AG04450 (cell line): ENCODE measurements at regions of chr3 and their contacts with region 1.

Region 1: GRCh38 chr3:354432-354831 is 157.9 kb downstream of the CHL1 start:
- DNase-seq: peak; percentile 29
- H3K4me3 ChIP-seq: no peak overlapping the region
- H3K27ac ChIP-seq: no peak overlapping the region
- H3K27me3 ChIP-seq: no peaks in the 10 kb centered on the region
- CTCF ChIP-seq: peak; percentile 88

Region 2: DNA sequence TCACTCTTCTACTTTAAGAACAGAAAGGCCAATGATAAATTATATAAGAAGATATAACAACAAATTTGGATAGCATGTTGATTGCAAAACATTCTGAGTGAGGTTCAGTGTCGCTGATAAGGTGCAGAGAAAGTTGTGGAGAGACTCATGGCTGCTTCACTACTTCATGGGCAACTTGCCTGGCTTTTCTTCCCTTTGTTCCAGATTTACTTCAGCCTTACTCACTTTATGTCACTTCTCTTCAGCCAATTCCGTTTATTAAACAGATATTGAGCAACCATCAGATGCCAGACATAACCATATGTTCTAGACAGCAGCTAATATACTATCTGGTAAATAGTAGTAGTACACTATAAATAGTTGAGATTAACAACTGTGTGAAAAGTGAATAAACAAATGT is 307.9 kb before region 1 on chr3:
- CTCF ChIA-PET with region 1: interaction called, 114 read pairs
- POLR2A ChIA-PET with region 1: no interaction called
- DNase-seq: no peak
- H3K4me3 ChIP-seq: no peak overlapping the region
- H3K27ac ChIP-seq: no peak overlapping the region
- H3K27me3 ChIP-seq: no peaks in the 10 kb centered on the region
- CTCF ChIP-seq: no peak

Region 3: DNA sequence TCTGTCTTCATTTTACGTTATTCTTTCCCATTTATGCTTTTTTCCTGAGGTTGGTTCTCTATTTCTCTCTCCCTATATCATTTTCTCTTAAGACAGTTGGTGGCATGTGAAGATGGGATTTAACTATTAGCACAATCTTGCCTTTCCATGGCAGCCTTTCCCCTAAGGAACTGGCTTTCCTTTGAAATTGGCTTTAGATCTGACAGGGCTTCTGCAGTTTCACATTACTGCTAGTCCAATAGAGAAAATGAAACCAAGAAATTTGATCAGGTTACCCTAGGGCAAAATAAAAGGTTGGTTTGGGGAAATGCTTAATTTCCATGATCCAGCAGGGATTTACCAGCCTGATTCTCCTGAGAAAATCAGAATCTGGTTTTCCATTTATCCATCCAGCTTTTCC is 180.5 kb before region 1 on chr3:
- CTCF ChIA-PET with region 1: interaction called, 14 read pairs
- POLR2A ChIA-PET with region 1: no interaction called
- DNase-seq: no peak
- H3K4me3 ChIP-seq: no peak overlapping the region
- H3K27ac ChIP-seq: no peak overlapping the region
- H3K27me3 ChIP-seq: no peaks in the 10 kb centered on the region
- CTCF ChIP-seq: no peak

Region 4: DNA sequence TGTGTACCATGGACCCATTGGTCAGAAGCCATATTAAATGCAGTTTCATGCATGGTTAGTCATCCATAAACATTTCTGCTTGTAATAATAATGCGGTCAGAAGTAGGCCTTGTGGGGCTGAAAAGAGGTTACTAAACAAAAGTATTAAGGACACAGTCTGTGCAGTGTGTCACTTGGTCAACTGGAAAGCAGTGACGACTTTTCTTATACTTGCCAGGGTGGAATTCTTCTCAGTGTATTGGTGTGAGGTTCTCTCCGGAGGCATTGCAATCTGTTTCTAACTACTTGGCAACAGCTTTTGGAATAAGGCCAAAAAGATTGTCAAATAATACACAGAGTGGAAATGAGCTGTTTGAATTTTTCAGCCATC is 111.1 kb before region 1 on chr3:
- CTCF ChIA-PET with region 1: interaction called, 16 read pairs
- POLR2A ChIA-PET with region 1: interaction called, 6 read pairs
- DNase-seq: peak; percentile 70
- H3K4me3 ChIP-seq: no peak overlapping the region
- H3K27ac ChIP-seq: peak overlapping the region; percentile 71
- H3K27me3 ChIP-seq: no peaks in the 10 kb centered on the region
- CTCF ChIP-seq: no peak

Region 5: DNA sequence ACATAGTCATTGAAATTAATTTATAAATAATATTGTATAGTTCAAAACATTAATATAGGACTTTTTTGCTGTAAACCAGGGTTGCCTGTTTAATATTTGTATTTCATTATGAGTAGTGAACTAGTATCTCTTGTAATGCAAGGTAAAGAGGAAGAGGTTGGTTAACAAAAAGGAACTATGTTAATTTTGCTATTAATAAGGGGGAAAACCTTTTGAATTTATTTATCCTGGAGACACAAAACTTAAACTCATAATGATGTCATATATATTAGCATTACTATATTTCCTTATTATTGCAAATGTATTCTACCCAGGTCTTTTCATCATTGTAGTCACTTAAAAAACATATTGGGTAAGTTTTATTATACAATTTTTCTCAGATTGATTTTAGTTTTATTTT is 63.4 kb before region 1 on chr3:
- CTCF ChIA-PET with region 1: interaction called, 16 read pairs
- POLR2A ChIA-PET with region 1: no interaction called
- DNase-seq: no peak
- H3K4me3 ChIP-seq: no peak overlapping the region
- H3K27ac ChIP-seq: no peak overlapping the region
- H3K27me3 ChIP-seq: no peaks in the 10 kb centered on the region
- CTCF ChIP-seq: no peak

Region 6: DNA sequence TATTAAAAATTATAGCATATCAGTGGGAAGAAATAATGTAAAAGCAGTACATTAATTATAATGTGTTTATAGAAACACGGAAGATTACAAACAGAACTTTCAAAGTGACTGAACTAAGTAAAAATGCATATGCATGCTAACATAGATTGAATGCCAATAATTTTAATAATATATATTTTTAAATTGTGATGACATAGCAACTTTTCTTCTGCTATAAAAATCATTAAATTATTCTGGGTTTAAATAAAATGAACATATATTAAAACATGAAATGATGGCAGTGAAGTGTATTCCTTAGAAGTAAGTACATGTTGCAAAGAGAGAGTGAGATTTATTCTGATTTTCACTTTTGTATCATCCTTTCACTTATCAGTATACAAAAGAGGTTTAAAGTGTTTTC is 28.9 kb before region 1 on chr3:
- CTCF ChIA-PET with region 1: interaction called, 15 read pairs
- POLR2A ChIA-PET with region 1: no interaction called
- DNase-seq: no peak
- H3K4me3 ChIP-seq: no peak overlapping the region
- H3K27ac ChIP-seq: no peak overlapping the region
- H3K27me3 ChIP-seq: no peaks in the 10 kb centered on the region
- CTCF ChIP-seq: no peak

Region 7: DNA sequence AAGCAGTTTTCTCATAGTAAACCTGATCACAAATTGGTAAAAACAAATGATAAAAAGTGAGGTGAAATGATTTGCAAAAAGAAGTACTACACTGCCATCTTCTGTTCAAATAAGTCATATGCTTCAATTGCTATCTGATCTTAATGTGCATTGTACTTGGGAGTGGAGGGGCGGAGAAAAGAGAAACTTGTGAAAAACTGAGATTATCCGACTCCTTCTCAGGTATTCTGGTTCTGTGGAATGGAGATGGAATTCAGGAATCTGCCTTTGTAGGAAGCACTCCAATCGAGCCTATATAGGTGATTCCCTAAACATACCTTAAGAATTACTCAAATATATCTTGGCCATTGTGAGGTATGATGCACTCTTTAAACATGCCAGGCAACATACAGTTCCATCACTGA is 22.7 kb after region 1 on chr3:
- CTCF ChIA-PET with region 1: interaction called, 18 read pairs
- POLR2A ChIA-PET with region 1: no interaction called
- DNase-seq: no peak
- H3K4me3 ChIP-seq: no peak overlapping the region
- H3K27ac ChIP-seq: no peak overlapping the region
- H3K27me3 ChIP-seq: no peaks in the 10 kb centered on the region
- CTCF ChIP-seq: peak; percentile 60